Adrenal gland (tissue), 19 donors: ENCODE measurements at regions of chr6 and their contacts with region 1.

Region 1: DNA sequence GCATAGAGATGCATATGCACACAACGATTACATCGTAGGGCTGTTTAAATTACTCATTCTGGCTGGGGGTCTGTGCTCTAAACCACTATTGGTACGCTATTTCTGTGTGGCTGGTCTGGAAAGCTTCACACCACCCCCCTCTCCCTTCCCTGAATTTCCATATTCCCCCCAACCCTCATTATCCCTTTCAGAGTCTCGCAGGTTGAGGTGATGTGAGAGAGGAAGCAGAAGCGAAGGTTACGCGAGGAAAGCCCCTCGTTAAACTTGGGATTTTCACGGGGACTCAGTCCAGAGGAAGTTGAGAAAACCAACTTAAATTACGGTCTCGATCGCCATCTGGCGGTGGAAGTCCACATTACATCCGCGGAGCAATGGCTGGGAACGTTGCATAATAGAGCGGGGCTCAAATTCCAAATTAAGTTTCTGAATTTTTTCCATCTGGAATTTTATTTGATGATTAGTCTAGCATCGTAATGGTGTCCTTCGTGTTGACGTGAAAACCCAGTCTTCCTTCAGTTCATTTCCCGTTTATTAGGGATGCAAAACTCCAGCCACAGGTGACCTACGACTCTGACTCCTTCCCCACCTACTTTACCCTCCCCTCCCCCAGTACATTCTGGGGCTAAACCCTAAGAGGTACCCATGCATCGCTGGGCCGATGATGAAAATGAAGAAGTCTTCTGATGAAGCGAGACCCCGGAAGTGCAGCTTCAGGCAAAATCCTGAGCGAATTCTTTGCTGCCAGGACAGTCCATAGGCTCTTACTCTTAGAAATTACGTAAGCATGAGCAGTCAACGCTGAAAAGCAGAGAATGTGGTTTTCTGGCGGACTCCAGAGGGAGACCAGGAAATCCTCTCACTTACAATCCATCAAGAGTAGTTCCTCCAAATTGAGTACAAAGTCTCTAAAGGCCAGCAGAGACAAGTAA is 19.7 kb downstream of the HLA-DOB start:
- DNase-seq: peak; percentile 48 to 91 (median 76)
- H3K4me3 ChIP-seq: peak overlapping the region in 1 of 4 donors; percentile 12
- H3K27ac ChIP-seq: no peak overlapping the region
- H3K4me1 ChIP-seq: no peaks in the 10 kb centered on the region
- H3K27me3 ChIP-seq: peaks cover 32% of the 10 kb centered on the region
- CTCF ChIP-seq: peak; percentile 85 to 91 (median 88)
- POLR2A ChIP-seq: no peak

Region 2: GRCh38 chr6:32244946-32245398 is 552.1 kb before region 1 on chr6:
- intact Hi-C with region 1: loop called in 1 of 2 experiments (anchors 10 kb)
- DNase-seq: peak; percentile 64 to 88 (median 79)
- H3K4me3 ChIP-seq: no peak overlapping the region
- H3K27ac ChIP-seq: peak overlapping the region in 2 of 5 donors; percentile 29 to 64
- H3K4me1 ChIP-seq: no peaks in the 10 kb centered on the region
- H3K27me3 ChIP-seq: no peaks in the 10 kb centered on the region
- CTCF ChIP-seq: peak; percentile 83 to 97 (median 91)
- POLR2A ChIP-seq: no peak

Region 3: DNA sequence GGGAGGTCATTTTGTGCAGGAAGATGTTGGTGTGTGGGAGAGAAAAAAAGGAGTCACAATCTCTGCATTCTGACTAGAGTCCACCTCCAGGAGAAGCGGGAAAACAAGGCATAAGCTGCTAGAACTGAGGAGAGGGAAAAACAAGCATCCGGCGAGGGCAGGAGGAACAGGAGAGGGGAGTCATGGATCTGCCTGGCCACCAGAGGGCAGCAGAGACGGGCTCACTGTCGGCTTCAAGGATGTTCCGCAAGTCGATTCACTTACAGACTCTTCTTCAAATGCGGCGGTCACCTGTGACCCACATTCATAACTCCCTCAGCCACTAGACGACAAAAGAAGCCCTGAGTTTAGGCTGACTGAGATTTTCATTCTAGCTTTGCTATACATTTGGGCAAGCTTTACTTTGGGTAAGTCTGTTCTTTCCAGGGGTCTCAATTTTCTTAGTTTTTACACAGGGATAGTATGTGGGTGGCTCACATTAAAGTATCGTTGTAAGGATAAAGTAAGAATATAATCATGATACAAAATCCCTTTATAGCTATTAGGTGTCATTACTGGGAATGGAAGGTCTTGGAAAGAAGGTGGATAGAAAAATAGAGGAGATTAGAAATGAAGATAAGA is 383.6 kb before region 1 on chr6:
- intact Hi-C with region 1: loop called (anchors 5 kb)
- DNase-seq: peak; percentile 62 to 85 (median 82)
- H3K4me3 ChIP-seq: no peak overlapping the region
- H3K27ac ChIP-seq: no peak overlapping the region
- H3K4me1 ChIP-seq: no peaks in the 10 kb centered on the region
- H3K27me3 ChIP-seq: peaks cover 28% of the 10 kb centered on the region
- CTCF ChIP-seq: peak; percentile 87 to 98 (median 90)
- POLR2A ChIP-seq: no peak

Region 4: DNA sequence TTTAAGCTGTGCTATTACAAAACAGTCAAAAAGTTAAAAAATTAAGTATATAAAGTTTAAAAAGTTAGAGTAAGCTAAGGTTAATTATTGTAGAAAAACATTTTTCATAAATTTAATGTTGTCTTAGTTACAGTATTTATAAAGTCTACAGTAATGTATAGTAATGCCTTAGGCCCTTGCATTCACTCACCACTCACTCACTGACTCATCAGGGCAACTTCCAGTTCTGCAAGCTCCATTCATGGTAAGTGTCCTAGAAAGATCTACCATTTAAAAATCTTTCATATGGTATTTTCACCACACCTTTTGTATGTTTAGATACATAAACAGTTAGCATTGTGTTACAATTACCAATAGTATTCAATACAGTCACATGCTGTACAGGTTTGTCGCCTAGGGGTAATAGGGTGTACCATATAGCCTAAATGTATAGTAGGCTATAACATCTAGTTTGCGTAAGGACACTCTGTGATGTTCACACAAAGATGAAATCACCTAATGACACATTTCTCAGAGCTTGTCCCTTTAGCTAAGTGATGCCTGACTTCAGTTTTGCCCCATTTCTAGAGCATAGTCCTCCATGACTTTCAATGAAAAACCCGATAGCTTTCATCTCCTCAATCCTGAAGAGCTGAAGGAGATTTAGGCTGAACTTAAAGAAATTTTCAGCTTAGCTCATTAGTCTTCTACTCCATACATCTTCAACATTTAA is 372.4 kb before region 1 on chr6:
- intact Hi-C with region 1: loop called (anchors 5 kb)
- DNase-seq: no peak
- H3K4me3 ChIP-seq: no peak overlapping the region
- H3K27ac ChIP-seq: no peak overlapping the region
- H3K4me1 ChIP-seq: no peaks in the 10 kb centered on the region
- H3K27me3 ChIP-seq: peaks cover 18% of the 10 kb centered on the region
- CTCF ChIP-seq: no peak
- POLR2A ChIP-seq: no peak

Region 5: GRCh38 chr6:32709625-32710024 is 87.5 kb before region 1 on chr6:
- intact Hi-C with region 1: loop called in 1 of 2 experiments (anchors 5 kb)
- DNase-seq: no peak
- H3K4me3 ChIP-seq: no peak overlapping the region
- H3K27ac ChIP-seq: no peak overlapping the region
- H3K4me1 ChIP-seq: no peaks in the 10 kb centered on the region
- H3K27me3 ChIP-seq: no peaks in the 10 kb centered on the region
- CTCF ChIP-seq: no peak
- POLR2A ChIP-seq: no peak

Region 6: GRCh38 chr6:33112148-33112547 is 315.0 kb after region 1 on chr6:
- intact Hi-C with region 1: no loop called
- DNase-seq: peak in 6 of 7 donors; percentile 29 to 70 (median 52)
- H3K4me3 ChIP-seq: no peak overlapping the region
- H3K27ac ChIP-seq: no peak overlapping the region
- H3K4me1 ChIP-seq: no peaks in the 10 kb centered on the region
- H3K27me3 ChIP-seq: peaks cover 11% of the 10 kb centered on the region
- CTCF ChIP-seq: no peak
- POLR2A ChIP-seq: no peak